Lower leg skin (tissue), 4 donors: ENCODE measurements at regions of chr16 and their contacts with region 1.

Region 1: DNA sequence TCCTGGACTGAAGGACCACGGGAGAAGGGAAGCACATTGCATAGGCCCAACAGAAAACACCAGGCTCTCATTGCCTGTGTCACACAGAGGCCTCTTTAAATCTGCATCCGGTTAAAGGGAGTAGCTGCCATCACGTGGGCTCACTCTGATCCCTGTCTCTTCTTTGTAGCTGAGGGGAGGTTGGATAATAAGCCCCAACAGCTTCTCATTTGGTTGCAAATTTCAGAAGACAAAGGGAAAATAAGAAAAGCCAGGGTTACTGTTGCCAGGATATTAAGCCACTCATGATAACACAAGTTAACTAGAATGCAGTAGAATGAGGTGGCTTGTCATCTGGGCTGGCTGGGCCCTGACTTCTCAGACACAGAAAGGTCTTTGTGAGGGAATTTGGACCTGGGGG is 325.1 kb upstream of the ERCC4 start:
- DNase-seq: no peak
- H3K4me3 ChIP-seq: no peak overlapping the region
- CTCF ChIP-seq: no peak
- POLR2A ChIP-seq: no peak

Region 2: DNA sequence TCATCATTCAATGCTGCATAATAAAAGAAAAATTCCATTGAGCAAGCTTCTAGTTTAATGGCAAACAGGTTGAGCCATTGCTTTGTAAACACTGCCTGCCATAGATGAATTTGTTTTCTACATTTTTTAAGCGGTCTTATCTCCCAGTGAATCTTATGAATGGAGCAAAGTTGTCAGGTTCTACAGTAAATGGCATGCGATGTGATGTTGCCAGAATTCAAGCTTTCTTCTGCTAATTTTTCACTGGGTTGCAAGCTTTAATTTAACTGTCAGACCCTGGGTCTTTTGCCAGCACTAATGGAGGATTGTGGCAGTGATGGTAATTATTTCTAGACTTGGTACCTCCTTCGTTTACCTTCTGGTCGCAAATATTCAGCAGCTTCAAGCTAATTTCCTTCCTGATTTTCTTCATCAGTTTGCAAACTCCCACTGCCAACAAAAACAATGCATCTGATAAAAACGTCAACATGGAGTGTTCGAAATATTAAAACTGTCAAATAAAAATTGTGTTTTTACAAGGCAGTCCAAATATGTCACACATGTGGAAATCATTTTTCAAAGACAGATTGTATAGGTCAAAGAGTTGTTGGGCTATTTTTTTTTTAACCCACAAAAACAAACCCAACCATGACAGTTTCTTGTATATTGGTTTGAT is 50.9 kb after region 1 on chr16:
- intact Hi-C with region 1: loop called (anchors 10 kb)
- DNase-seq: no peak
- H3K4me3 ChIP-seq: no peak overlapping the region
- CTCF ChIP-seq: no peak
- POLR2A ChIP-seq: no peak